ENCODE measurements at regions of chr12 and their contacts with region 1.

Region 1: GRCh38 chr12:11581179-11581755 is 68.2 kb upstream of the ETV6 start:
- DNase-seq: peak; percentile 78
- ATAC-seq: 0 out of 2 replicates have a peak, but pooled peaks have one; percentile 19
- H3K4me3 ChIP-seq: no peak overlapping the region
- H3K27ac ChIP-seq: no peak overlapping the region
- H3K4me1 ChIP-seq: peaks cover 7% of the 10 kb centered on the region
- H3K27me3 ChIP-seq: peaks cover 5% of the 10 kb centered on the region
- CTCF ChIP-seq: peak; percentile 63
- POLR2A ChIP-seq: no peak
- RAD21 ChIP-seq: peak; percentile 87

Region 2: GRCh38 chr12:11513288-11513687 is 68.0 kb before region 1 on chr12:
- CTCF ChIA-PET with region 1: no interaction called
- POLR2A ChIA-PET with region 1: no interaction called
- dilution Hi-C with region 1: no loop called
- in situ Hi-C with region 1: no loop called
- intact Hi-C with region 1: no loop called
- DNase-seq: no peak
- ATAC-seq: no peak
- H3K4me3 ChIP-seq: no peak overlapping the region
- H3K27ac ChIP-seq: no peak overlapping the region
- H3K4me1 ChIP-seq: no peaks in the 10 kb centered on the region
- H3K27me3 ChIP-seq: peaks cover 5% of the 10 kb centered on the region; the same call in 1 of the 2 replicates
- CTCF ChIP-seq: no peak
- POLR2A ChIP-seq: no peak
- RAD21 ChIP-seq: no peak

Region 3: GRCh38 chr12:11621797-11622423 is 40.6 kb after region 1 on chr12:
- CTCF ChIA-PET with region 1: interaction called, 4 read pairs
- POLR2A ChIA-PET with region 1: no interaction called
- dilution Hi-C with region 1: no loop called
- in situ Hi-C with region 1: no loop called
- intact Hi-C with region 1: loop called (anchors 5 kb)
- DNase-seq: no peak
- ATAC-seq: no peak
- H3K4me3 ChIP-seq: no peak overlapping the region
- H3K27ac ChIP-seq: no peak overlapping the region
- H3K4me1 ChIP-seq: peaks cover 4% of the 10 kb centered on the region
- H3K27me3 ChIP-seq: no peaks in the 10 kb centered on the region
- CTCF ChIP-seq: 0 out of 2 replicates have a peak, but pooled peaks have one; percentile 8
- POLR2A ChIP-seq: no peak
- RAD21 ChIP-seq: peak; percentile 22; the same call in 1 of the 2 replicates

Region 4: DNA sequence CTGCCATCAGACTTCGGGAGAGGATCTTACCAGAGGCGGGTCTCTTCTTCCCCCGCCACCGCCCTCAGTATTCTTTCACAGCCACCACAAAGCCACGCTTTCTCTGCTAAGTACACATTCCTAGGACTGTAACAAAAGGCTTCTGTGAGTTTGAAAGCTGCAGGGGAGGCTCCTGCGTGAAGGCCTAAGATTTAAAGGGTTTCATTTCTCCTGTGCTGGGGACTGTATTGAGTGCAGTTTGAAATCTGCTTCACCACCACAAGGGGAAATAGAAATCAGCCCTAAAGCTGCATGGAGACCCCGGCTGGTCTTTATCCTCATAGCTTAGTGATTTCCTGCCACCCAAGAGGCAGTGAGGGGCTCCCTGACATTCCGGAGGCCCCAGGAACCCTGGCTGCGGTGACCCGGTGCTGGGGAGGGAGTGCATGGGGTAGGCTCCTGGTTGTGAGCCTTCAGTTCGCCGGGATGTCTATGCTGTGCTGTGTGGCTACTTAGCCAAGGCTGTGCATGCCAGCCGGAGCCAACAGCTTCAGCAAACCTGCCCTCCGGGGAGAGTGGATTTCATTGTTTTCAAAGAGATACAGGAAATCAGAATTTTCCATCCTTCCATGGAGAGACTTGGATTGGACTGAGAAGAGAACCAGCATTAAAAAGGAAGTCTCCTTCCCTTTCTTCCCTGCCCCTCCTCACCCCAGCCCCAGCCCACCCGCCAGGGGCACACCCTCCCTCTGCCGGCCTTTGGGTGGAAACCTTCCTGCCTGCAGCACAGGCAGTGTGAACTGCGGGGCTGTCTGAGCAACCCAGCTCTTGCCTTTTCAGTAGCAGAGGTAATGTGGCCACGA is 231.5 kb after region 1 on chr12:
- CTCF ChIA-PET with region 1: no interaction called
- POLR2A ChIA-PET with region 1: no interaction called
- dilution Hi-C with region 1: no loop called
- in situ Hi-C with region 1: no loop called
- intact Hi-C with region 1: loop called (anchors 2 kb)
- DNase-seq: peak; percentile 27
- ATAC-seq: peak; percentile 62
- H3K4me3 ChIP-seq: no peak overlapping the region
- H3K27ac ChIP-seq: peak overlapping the region; percentile 42
- H3K4me1 ChIP-seq: peaks cover 18% of the 10 kb centered on the region
- H3K27me3 ChIP-seq: no peaks in the 10 kb centered on the region
- CTCF ChIP-seq: no peak
- POLR2A ChIP-seq: no peak
- RAD21 ChIP-seq: no peak

Region 5: GRCh38 chr12:11877869-11878780 is 296.9 kb after region 1 on chr12:
- CTCF ChIA-PET with region 1: no interaction called
- POLR2A ChIA-PET with region 1: no interaction called
- dilution Hi-C with region 1: no loop called
- in situ Hi-C with region 1: no loop called
- intact Hi-C with region 1: loop called (anchors 5 kb)
- DNase-seq: peak; percentile 80
- ATAC-seq: peak; percentile 99
- H3K4me3 ChIP-seq: no peak overlapping the region
- H3K27ac ChIP-seq: peak overlapping the region; percentile 63
- H3K4me1 ChIP-seq: peaks cover 7% of the 10 kb centered on the region
- H3K27me3 ChIP-seq: no peaks in the 10 kb centered on the region
- CTCF ChIP-seq: no peak
- POLR2A ChIP-seq: no peak
- RAD21 ChIP-seq: no peak

Region 6: GRCh38 chr12:12327802-12328201 is 746.5 kb after region 1 on chr12:
- CTCF ChIA-PET with region 1: no interaction called
- POLR2A ChIA-PET with region 1: no interaction called
- dilution Hi-C with region 1: no loop called
- in situ Hi-C with region 1: loop called (anchors 10 kb)
- intact Hi-C with region 1: loop called (anchors 5 kb)
- DNase-seq: peak; percentile 73
- ATAC-seq: peak; percentile 65
- H3K4me3 ChIP-seq: no peak overlapping the region
- H3K27ac ChIP-seq: no peak overlapping the region
- H3K4me1 ChIP-seq: peaks cover 2% of the 10 kb centered on the region; the same call in 1 of the 2 replicates
- H3K27me3 ChIP-seq: 0 out of 2 replicates have a peak, but pooled peaks cover 2% of the 10 kb centered on the region
- CTCF ChIP-seq: peak; percentile 80
- POLR2A ChIP-seq: no peak
- RAD21 ChIP-seq: peak; percentile 82

Region 7: GRCh38 chr12:12334367-12335040 is 753.2 kb after region 1 on chr12:
- CTCF ChIA-PET with region 1: no interaction called
- POLR2A ChIA-PET with region 1: no interaction called
- dilution Hi-C with region 1: no loop called
- in situ Hi-C with region 1: loop called (anchors 10 kb)
- intact Hi-C with region 1: loop called (anchors 5 kb)
- DNase-seq: peak; percentile 46
- ATAC-seq: peak; percentile 30; the same call in 1 of the 2 replicates
- H3K4me3 ChIP-seq: no peak overlapping the region
- H3K27ac ChIP-seq: no peak overlapping the region
- H3K4me1 ChIP-seq: peaks cover 2% of the 10 kb centered on the region; the same call in 1 of the 2 replicates
- H3K27me3 ChIP-seq: 0 out of 2 replicates have a peak, but pooled peaks cover 2% of the 10 kb centered on the region
- CTCF ChIP-seq: peak; percentile 74
- POLR2A ChIP-seq: no peak
- RAD21 ChIP-seq: peak; percentile 60

Measured in IMR-90 (cell line).